ENCODE measurements at regions of chr16 and their contacts with region 1.

Region 1: DNA sequence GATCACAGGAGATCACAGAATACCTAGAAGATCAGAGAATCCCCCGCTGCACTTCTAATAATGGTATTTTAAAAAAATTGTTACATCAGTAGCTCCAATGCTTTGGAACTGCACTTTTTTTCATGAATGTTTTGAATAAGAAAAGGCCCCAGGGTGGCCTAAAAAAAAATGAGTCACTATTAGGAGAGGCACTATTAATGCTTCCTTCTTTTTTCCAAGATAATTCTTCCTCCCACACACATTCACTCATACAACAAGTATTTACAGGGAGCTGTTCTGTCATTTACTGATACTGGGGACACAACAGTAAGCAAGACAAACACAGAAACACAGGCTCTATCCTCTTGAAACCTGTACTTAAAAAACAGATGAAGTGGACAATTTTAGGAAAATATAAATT is 675 bp upstream of the PDZD9 start:
- DNase-seq: peak in 1 of 35 experiments; percentile 8
- ATAC-seq: no peak
- H3K4me3 ChIP-seq: no peak overlapping the region
- H3K4me3 Mint-ChIP-seq: peak overlapping the region in 1 of 3 donors; percentile 53
- H3K27ac ChIP-seq: no peak overlapping the region
- H3K27ac Mint-ChIP-seq: no peak overlapping the region
- H3K4me1 ChIP-seq: peaks cover 0 to 7% of the 10 kb centered on the region in 2 experiments
- H3K4me1 Mint-ChIP-seq: peaks cover 10 to 14% (median 11%) of the 10 kb centered on the region in 3 donors
- H3K27me3 ChIP-seq: peaks cover 0 to 9% of the 10 kb centered on the region in 2 experiments
- H3K27me3 Mint-ChIP-seq: peaks cover 0 to 2% of the 10 kb centered on the region in 2 donors

Region 2: DNA sequence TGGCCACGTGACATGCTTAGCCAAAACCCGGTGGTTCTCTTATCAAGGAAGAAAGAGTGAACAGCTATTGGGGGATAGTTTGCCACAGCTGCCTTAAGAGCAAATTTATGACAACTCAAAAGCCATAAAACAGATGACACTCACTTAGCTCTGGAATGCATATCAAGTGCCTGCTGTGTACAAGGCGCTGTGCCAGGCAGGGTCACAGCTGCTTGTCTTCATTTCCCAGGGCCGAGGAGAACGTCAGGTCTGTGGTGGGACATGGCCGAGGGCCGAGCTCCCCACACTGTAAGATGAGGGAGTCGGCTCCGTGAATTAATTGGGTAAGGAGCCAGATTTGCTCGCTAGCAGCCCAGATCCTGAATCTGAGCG is 218.5 kb after region 1 on chr16:
- CTCF ChIA-PET with region 1: interaction called in 1 of 2 experiments, 4 read pairs
- POLR2A ChIA-PET with region 1: interaction called in 1 of 2 experiments, 11 read pairs
- DNase-seq: no peak
- ATAC-seq: no peak
- H3K4me3 ChIP-seq: no peak overlapping the region
- H3K4me3 Mint-ChIP-seq: no peak overlapping the region
- H3K27ac ChIP-seq: no peak overlapping the region
- H3K27ac Mint-ChIP-seq: no peak overlapping the region
- H3K4me1 ChIP-seq: no peaks in the 10 kb centered on the region
- H3K4me1 Mint-ChIP-seq: peaks cover 0 to 11% (median 0%) of the 10 kb centered on the region in 3 donors
- H3K27me3 ChIP-seq: no peaks in the 10 kb centered on the region
- H3K27me3 Mint-ChIP-seq: no peaks in the 10 kb centered on the region

Measured in T-cell (primary cell).